Dendritic cell treated with granulocyte-macrophage colony-stimulating factor and Interleukin-4, amounts not matched to agents 40 ng/mL and 50 ng/mL, for 4 days (primary cell): ENCODE measurements at regions of chr11 and their contacts with region 1.

Region 1: DNA sequence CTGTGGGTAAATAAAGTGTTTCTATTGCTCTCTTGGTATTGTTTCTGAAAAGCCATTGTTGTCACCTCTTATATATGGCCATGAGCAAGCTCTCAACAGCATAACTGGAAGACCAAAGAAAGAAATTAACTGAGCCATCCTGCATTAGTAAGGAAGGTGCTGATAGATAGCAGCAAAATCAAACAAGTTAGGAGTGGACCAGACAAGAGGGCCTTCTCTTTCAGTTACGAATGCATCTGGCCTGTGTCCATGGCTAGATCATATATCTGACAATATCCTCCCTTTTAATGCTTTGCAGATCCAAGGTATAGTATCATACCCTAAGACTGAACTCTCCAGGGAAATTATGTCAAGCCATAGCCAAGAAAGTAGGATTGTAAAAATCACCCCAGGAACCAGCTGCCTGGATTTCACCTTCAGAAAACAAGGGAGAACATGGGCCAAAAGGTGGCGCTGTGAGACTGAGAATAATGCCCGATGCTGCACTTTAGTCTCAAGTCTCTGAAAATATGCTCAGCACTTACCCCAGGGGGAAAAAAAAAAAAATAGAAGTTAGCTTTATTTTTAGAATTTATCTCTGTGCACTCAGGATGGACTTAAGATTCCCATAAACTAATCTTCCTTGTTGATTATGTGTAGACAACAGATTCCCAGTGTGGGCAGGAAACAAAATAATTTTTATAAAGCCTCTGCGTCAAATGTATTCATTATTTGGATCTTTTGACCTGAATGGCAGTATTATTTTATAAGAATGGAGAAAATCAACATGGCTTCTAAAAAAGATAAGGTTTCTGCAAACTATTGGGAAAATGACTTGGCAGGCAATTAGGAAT is 415.1 kb downstream of the ETS1 start:
- H3K4me3 Mint-ChIP-seq: no peak overlapping the region
- H3K27ac Mint-ChIP-seq: no peak overlapping the region
- H3K4me1 Mint-ChIP-seq: no peaks in the 10 kb centered on the region
- H3K27me3 Mint-ChIP-seq: no peaks in the 10 kb centered on the region

Region 2: GRCh38 chr11:128082574-128082973 is 89.7 kb before region 1 on chr11:
- intact Hi-C with region 1: no loop called
- H3K4me3 Mint-ChIP-seq: no peak overlapping the region
- H3K27ac Mint-ChIP-seq: no peak overlapping the region
- H3K4me1 Mint-ChIP-seq: no peaks in the 10 kb centered on the region
- H3K27me3 Mint-ChIP-seq: no peaks in the 10 kb centered on the region

Region 3: GRCh38 chr11:128630367-128631230 is 458.3 kb after region 1 on chr11:
- intact Hi-C with region 1: loop called (anchors 1 kb)
- H3K4me3 Mint-ChIP-seq: no peak overlapping the region
- H3K27ac Mint-ChIP-seq: no peak overlapping the region
- H3K4me1 Mint-ChIP-seq: peaks cover 1% of the 10 kb centered on the region
- H3K27me3 Mint-ChIP-seq: peaks cover 3% of the 10 kb centered on the region

Region 4: GRCh38 chr11:128765571-128766549 is 593.6 kb after region 1 on chr11:
- intact Hi-C with region 1: loop called (anchors 10 kb)
- H3K4me3 Mint-ChIP-seq: no peak overlapping the region
- H3K27ac Mint-ChIP-seq: no peak overlapping the region
- H3K4me1 Mint-ChIP-seq: peaks cover 5% of the 10 kb centered on the region
- H3K27me3 Mint-ChIP-seq: no peaks in the 10 kb centered on the region

Region 5: GRCh38 chr11:128831174-128832120 is 659.2 kb after region 1 on chr11:
- intact Hi-C with region 1: loop called (anchors 5 kb)
- H3K4me3 Mint-ChIP-seq: no peak overlapping the region
- H3K27ac Mint-ChIP-seq: no peak overlapping the region
- H3K4me1 Mint-ChIP-seq: peaks cover 40% of the 10 kb centered on the region
- H3K27me3 Mint-ChIP-seq: no peaks in the 10 kb centered on the region